ENCODE measurements at regions of chr15 and their contacts with region 1.

Region 1: DNA sequence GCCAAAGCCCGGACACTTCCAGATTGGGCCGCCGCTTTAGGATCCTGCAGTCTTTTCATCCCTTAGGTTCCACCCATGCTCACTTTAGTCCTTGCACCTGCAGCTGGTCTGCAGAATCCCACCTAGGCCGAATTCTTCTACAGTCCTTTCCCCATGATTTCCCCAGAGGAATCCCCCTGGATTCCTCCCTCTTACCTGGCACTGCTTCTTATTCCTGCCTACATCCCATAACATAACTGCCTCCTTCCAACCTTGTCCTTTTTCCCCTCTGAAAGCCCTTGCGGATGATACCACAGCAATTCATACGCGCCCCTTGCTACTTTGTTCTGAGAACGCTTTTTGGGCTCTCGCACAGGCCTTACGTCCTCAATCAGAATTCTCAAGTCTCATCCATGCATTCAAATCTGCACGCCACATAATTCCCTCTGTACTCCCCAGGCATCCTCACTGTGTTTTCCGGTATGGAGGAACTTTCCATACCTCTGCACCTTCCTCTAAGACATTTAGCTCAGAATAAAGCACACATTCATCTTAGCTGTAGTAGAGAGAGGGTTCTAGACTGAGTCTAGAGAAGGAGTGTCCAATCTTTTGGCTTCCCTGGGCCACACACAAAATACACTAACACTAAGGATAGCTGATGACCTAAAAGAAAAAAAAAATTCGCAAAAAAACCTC is 619 bp downstream of the EIF2AK4 start:
- DNase-seq: no peak
- H3K4me3 ChIP-seq: peak overlapping the region; percentile 75
- CTCF ChIP-seq: no peak

Region 2: GRCh38 chr15:39920510-39921273 is 13.8 kb before region 1 on chr15:
- CTCF ChIA-PET with region 1: interaction called, 7 read pairs
- POLR2A ChIA-PET with region 1: interaction called, 15 read pairs
- DNase-seq: no peak
- H3K4me3 ChIP-seq: peak overlapping the region; percentile 90
- CTCF ChIP-seq: peak; percentile 9